Left cardiac atrium (tissue), 4 donors: ENCODE measurements at regions of chr16 and their contacts with region 1.

Region 1: GRCh38 chr16:30786936-30787612 is at the start of gene ZNF629:
- DNase-seq: peak; percentile 81
- ATAC-seq: peak; percentile 85 to 92
- total RNA-seq, gene ZNF629: 16.6 to 28.3 TPM

Region 2: DNA sequence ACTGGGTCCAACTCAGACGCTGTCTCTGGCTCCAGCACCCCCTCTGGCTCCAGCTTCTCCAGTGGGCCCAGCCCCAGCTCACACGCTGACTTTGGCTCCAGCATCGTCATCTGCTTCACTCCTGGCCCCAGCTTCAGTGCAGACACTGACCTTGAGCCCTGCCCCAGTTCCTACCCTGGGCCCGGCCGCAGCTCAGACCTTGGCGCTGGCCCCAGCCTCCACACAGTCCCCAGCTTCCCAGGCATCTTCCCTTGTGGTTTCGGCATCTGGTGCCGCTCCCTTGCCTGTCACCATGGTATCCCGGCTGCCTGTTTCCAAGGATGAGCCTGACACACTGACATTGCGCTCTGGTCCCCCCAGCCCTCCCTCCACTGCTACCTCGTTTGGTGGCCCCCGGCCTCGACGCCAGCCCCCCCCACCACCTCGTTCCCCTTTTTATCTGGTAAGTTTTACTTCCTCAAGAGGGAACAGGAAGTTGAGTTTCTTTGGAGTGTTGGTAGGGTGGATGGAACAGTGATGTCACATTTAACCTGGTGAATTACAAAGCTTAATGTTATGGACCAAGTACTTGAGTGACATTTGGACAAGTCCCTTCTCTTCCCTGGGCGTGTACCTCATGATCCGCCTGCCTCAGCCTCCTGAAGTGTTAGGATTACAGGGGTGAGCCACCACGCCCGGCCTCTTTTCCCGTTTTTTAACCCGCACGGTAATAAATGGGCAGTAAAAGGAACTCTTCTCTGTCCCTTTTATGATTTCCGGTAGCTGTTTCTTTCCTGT is 62.2 kb before region 1 on chr16:
- intact Hi-C with region 1: no loop called
- DNase-seq: peak; percentile 37
- ATAC-seq: peak; percentile 48 to 58

Region 3: GRCh38 chr16:30805370-30806169 is 18.5 kb after region 1 on chr16:
- intact Hi-C with region 1: loop called in 1 of 2 experiments (anchors 1 kb)
- DNase-seq: peak; percentile 94
- ATAC-seq: peak; percentile 97 to 99

Region 4: DNA sequence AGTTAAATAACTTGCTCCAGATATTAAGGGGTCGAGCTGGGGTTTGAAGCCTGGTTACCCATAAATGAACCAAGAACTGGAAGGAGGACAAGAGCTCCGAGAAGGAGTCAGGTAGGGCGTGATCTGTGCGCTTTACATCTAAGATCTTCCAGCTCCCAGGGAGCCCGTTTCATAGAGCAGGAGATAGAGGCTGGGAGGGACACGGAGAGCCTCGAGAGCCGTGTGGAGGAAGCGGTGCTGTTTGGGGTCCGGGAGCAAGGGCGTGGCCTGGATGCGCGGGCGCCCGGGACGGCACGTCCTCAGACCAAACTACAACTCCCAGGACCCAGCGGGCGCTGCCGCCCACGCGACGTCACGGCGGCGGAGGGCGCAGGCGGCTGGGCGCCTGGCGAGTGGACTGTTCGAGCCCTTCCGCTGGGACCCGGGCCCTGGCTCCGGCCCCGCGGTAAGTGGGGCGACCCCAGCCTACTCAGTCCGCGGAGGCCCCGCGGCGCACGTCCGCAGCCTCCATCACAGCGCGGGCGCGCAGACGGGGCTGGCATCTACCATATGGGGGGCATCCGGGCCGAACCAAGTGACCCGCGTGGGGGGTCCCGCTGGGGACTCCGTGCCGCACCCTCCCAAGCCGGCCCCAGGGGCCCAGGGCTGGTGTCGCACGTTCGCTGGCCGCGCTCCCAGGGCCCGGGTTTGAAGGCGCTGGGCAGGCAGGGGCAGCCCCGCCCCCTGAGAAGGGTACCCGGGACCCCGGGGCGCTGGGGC is 321.1 kb after region 1 on chr16 and contains the start of gene BCKDK:
- intact Hi-C with region 1: no loop called
- DNase-seq: peak; percentile 87
- ATAC-seq: peak; percentile 87 to 89
- total RNA-seq, gene BCKDK: 43.4 to 46.4 TPM